Cardiac septum (tissue), 1 donor: ENCODE measurements at regions of chrX and their contacts with region 1.

Region 1: DNA sequence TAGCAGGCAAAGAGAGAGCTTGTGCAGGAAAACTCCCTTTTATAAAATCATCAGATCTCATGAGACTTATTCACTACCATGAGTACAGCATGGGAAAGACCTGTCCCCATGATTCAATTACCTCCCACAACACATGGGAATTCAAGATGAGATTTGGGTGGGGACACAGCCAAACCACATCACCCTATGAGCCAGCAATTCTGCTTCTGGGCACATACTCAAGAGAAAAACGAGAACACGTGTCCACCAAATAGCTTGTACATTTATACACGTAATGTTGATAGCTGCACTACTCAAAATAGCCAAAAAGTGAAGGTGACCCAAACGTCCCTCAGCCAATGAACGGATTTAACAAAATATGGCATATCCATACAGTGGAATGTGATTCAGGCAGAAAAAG is 94.5 kb upstream of the DHRSX start:
- DNase-seq: no peak

Region 2: GRCh38 chrX:1657367-1658070 is 937.7 kb before region 1 on chrX:
- intact Hi-C with region 1: loop called (anchors 2 kb)
- DNase-seq: no peak

Region 3: GRCh38 chrX:2484721-2485648 is 110.3 kb before region 1 on chrX:
- intact Hi-C with region 1: no loop called
- DNase-seq: peak; percentile 57